ENCODE measurements at regions of chr19 and their contacts with region 1.

Region 1: GRCh38 chr19:3716147-3716668 is 8.0 kb downstream of the TJP3 start:
- DNase-seq: no peak
- H3K4me3 ChIP-seq: no peak overlapping the region
- H3K27ac ChIP-seq: no peak overlapping the region
- H3K4me1 ChIP-seq: peaks cover 0 to 5% (median 2%) of the 10 kb centered on the region in 3 donors
- H3K27me3 ChIP-seq: no peaks in the 10 kb centered on the region
- CTCF ChIP-seq: no peak

Region 2: DNA sequence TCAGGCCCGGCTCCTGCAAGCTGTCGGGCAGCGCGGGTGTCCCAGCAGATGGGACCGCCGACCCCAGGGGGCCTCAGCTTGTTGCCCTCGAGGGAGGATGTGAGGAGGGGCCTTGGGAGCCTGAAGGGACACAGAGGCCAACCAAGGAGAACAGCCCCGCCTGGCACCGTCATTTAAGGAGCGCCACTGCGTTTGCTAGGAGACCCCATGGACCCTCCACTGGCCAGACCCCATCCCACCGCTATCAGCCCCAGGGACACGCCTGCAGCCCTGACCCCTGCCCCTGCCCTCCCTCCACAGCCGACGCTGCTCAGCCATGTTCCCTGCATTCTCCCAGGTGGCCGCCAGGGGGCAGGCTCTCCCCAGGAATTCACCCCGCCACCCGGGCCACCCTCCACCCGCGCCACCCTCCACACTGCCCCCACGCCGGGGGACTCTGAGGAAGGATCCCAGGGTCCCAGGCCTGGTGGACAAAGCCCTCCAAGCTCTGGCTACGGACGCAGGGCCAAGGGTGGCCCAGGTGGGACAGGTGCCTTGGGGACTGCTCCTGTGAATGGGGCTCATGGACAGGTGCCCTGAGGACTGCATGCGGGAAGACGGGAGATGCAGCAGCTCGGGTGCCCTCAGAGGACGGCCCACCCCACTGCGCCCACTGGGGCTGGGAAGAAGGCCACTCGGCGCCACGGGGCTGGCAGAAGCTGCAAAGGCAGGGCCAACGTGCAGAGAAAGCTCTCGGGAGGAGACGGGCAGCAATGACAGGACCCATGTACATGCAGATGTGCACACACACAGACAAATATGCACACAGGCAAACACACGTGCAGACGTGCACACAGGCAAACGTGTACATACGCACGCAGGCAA is 50.3 kb before region 1 on chr19:
- intact Hi-C with region 1: loop called (anchors 5 kb)
- DNase-seq: peak in 4 of 5 donors; percentile 41 to 80 (median 64)
- H3K4me3 ChIP-seq: no peak overlapping the region
- H3K27ac ChIP-seq: no peak overlapping the region
- H3K4me1 ChIP-seq: peaks cover 0 to 10% (median 0%) of the 10 kb centered on the region in 3 donors
- H3K27me3 ChIP-seq: no peaks in the 10 kb centered on the region
- CTCF ChIP-seq: peak; percentile 90

Region 3: GRCh38 chr19:3821857-3822364 is 105.7 kb after region 1 on chr19:
- intact Hi-C with region 1: no loop called
- DNase-seq: peak in 4 of 5 donors; percentile 42 to 80 (median 64)
- H3K4me3 ChIP-seq: no peak overlapping the region
- H3K27ac ChIP-seq: no peak overlapping the region
- H3K4me1 ChIP-seq: peaks cover 0 to 2% (median 0%) of the 10 kb centered on the region in 3 donors
- H3K27me3 ChIP-seq: no peaks in the 10 kb centered on the region
- CTCF ChIP-seq: peak; percentile 96

Region 4: DNA sequence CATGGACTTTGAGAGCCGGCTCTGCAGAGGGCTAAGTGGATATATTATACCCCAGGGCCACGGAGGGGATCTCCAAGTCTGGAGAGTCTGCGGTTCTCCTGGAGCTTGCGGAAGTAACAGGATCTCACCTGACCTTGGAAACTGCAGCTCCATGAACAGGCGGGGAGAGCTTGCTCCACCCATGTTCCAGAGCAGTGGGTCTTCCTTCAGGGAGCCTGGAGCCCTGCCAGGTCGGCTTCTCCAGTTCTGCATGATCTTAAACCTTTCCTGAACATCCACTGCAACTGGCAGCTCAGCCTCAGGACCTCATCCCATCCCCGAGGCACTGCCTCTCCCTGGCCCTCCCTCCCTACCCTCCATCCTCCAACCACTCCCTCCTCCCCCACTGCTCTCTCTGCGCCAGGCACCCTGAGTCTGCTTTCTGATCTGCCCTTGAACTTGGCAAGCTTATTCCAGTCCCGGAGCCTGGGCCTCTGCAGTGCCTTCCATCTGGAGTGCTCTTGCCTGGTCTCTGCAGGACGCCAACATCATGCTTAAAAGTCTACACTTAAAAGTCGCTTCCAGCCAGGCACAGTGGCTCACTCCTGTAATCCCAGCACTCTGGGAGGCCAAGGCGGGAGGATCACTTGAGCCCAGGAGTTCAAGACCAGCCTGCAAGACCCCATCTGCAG is 177.4 kb after region 1 on chr19:
- intact Hi-C with region 1: no loop called
- DNase-seq: peak in 1 of 5 donors; percentile 18
- H3K4me3 ChIP-seq: no peak overlapping the region
- H3K27ac ChIP-seq: no peak overlapping the region
- H3K4me1 ChIP-seq: no peaks in the 10 kb centered on the region
- H3K27me3 ChIP-seq: no peaks in the 10 kb centered on the region
- CTCF ChIP-seq: no peak